ENCODE measurements at regions of chr11 and their contacts with region 1.

Region 1: GRCh38 chr11:30131535-30131934 is 99.3 kb upstream of the FSHB start:
- DNase-seq: no peak
- H3K4me3 ChIP-seq: no peak overlapping the region
- H3K27ac ChIP-seq: no peak overlapping the region
- H3K4me1 ChIP-seq: peaks cover 0 to 5% (median 0%) of the 10 kb centered on the region in 4 donors
- H3K27me3 ChIP-seq: no peaks in the 10 kb centered on the region
- CTCF ChIP-seq: peak; percentile 15 to 45 (median 18)
- EP300 ChIP-seq: no peak
- POLR2A ChIP-seq: no peak

Region 2: GRCh38 chr11:30314625-30315024 is 183.1 kb after region 1 on chr11:
- intact Hi-C with region 1: loop called (anchors 10 kb)
- DNase-seq: no peak
- H3K4me3 ChIP-seq: no peak overlapping the region
- H3K27ac ChIP-seq: no peak overlapping the region
- H3K4me1 ChIP-seq: no peaks in the 10 kb centered on the region
- H3K27me3 ChIP-seq: no peaks in the 10 kb centered on the region
- CTCF ChIP-seq: peak; percentile 18 to 50 (median 38)
- EP300 ChIP-seq: no peak
- POLR2A ChIP-seq: no peak

Measured in esophagus muscularis mucosa (tissue), 4 donors.